ENCODE measurements at regions of chr1 and their contacts with region 1.

Region 1: DNA sequence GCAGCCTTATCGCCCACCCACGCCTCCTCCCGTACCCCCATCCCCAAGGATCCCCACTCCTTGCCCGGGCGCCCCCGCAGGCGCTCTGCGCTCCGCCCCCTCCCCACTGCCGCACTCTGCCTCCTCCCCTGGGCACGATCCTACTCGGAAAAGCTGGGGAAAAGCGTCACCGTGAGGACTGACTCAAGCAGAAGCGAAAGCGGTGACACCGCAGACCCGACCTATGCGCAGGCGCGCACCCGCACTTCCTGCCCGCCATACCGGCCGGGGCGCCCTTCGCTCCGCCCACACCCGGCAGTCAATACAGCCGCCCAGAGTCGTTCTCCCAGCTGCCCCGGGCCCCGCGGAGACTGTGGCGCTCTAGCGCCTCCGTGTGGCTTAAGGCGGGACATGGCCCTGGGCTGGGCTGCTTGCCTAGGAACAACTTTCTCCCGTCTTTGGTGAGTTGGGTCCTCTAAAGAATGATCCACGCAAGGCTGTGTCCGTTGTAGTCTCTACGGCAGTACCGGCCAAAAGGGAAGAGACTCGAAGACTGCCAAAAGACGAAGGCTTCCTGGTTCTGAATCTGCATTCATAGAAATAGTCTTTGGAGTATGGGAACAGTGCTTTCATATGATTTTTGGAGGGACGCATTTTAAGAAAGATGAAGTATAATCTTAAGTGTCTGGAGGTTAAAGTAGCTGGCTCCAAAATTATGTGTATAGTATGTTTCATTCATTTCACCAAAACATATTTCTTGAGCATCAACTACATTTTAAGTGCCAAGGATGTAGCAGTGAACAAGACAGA is at the start of gene OMA1:
- DNase-seq: peak; percentile 98
- ATAC-seq: peak; percentile 93
- H3K4me3 Mint-ChIP-seq: peak within 1 kb of the TSS; percentile 96
- H3K27ac Mint-ChIP-seq: peak within 1 kb of the TSS; percentile 97
- H3K4me1 Mint-ChIP-seq: peaks cover 19% of the 10 kb centered on the region
- H3K27me3 Mint-ChIP-seq: peaks cover 2% of the 10 kb centered on the region
- CTCF ChIP-seq: peak; percentile 24
- total RNA-seq, gene OMA1: 47.8 and 48.7 TPM in 2 replicates

Region 2: GRCh38 chr1:57296726-57297250 is 1249.9 kb before region 1 on chr1:
- CTCF ChIA-PET with region 1: no interaction called
- POLR2A ChIA-PET with region 1: no interaction called
- intact Hi-C with region 1: loop called (anchors 5 kb)
- DNase-seq: no peak
- ATAC-seq: no peak
- H3K4me3 Mint-ChIP-seq: no peak overlapping the region
- H3K27ac Mint-ChIP-seq: no peak overlapping the region
- H3K4me1 Mint-ChIP-seq: no peaks in the 10 kb centered on the region
- H3K27me3 Mint-ChIP-seq: no peaks in the 10 kb centered on the region
- CTCF ChIP-seq: no peak

Region 3: DNA sequence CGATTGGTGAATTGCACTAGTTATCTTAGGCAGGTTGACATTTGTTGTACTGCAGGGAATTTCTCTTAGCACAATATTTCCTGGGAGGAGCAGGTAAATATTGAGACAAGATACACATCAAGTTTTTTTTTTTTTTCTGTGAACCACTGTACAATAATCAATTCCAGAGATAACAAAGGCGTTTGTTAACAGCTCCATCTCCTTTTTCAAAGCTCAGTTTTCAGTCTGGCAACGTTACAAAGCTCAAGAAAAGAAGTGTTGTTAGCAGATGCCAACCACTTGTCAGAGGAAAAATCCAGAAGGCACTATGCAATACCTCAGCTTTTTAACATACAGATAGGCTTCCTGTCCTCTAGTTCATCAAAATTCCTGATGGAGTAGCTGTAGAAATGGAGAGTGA is 1082.0 kb before region 1 on chr1:
- CTCF ChIA-PET with region 1: no interaction called
- POLR2A ChIA-PET with region 1: no interaction called
- intact Hi-C with region 1: no loop called
- DNase-seq: no peak
- ATAC-seq: no peak
- H3K4me3 Mint-ChIP-seq: no peak overlapping the region
- H3K27ac Mint-ChIP-seq: no peak overlapping the region
- H3K4me1 Mint-ChIP-seq: no peaks in the 10 kb centered on the region
- H3K27me3 Mint-ChIP-seq: peaks cover 3% of the 10 kb centered on the region
- CTCF ChIP-seq: no peak

Region 4: DNA sequence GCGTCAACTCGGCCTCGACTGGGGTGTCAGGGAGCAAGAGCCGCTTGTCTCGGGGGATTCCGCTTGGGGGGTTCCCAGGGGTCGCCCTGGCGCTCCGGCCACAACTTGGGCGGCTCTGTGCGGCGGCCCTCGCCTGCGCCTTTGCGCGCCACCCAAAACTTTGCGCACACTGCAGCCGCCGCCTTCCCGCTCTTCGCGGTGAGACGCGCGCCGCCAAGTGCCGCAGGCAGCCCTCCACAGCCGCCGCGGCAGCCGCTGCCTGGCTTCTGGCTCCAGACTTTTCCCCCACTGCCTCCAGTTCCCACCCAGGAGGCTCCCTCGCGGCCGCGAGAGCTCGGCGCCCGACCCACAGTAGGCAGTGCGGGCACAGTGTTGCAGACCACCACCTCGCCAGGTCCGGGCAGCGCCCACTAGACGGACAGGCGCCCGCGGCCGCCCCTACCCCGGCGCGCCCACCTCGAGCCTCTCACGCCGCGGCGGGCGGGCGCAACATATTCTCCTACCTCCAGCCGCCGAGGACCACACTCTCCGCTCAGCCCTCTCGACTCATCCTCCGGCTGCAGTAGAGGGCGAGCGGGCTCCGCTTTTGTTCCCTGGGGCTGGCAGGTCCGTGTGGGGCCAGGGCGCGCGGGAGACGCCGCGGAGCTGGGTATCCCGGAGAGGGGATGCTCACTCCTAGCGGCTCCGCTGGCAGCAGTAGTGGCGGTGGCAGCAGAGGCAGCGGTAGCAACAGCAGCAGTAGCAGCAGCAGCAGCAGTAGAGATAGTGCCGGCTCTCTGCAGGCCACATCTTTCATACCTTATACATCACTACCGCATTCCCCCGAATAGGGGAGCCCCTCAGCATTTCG is 296.8 kb before region 1 on chr1:
- CTCF ChIA-PET with region 1: no interaction called
- POLR2A ChIA-PET with region 1: no interaction called
- intact Hi-C with region 1: loop called (anchors 1 kb)
- DNase-seq: no peak
- ATAC-seq: peak; percentile 18
- H3K4me3 Mint-ChIP-seq: peak overlapping the region; percentile 32
- H3K27ac Mint-ChIP-seq: no peak overlapping the region
- H3K4me1 Mint-ChIP-seq: peaks cover 4% of the 10 kb centered on the region
- H3K27me3 Mint-ChIP-seq: peaks cover 31% of the 10 kb centered on the region
- CTCF ChIP-seq: no peak

Region 5: DNA sequence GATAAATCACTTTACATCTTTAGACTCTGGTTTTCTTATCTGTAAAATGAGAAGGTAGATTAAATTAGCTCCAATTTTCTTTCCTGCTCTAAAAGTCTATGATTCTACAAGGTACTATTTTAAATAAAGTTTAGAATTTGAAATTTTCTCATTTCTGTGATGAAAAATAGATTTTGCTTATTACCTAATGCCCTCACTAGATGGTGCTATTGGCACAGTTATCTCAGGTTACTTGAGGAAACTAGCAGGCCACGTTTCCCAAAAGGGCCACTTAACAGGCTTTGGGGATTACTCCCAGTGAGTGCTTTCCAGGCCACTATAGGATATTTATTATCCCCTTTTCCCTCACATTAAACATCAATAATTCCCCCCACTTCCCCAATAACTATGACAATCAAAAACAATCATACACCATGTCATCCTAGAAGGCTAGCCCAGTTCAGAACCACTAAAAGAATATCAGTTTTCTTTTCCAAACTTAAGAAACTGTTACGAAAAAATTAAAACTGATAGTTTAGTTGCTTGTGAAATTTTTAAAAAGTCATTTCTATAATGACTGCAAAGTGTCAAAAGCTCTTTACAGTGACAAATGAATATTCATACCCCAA is 30.8 kb before region 1 on chr1:
- CTCF ChIA-PET with region 1: interaction called, 55 read pairs
- POLR2A ChIA-PET with region 1: interaction called, 13 read pairs
- intact Hi-C with region 1: loop called (anchors 1 kb)
- DNase-seq: no peak
- ATAC-seq: peak; percentile 52
- H3K4me3 Mint-ChIP-seq: no peak overlapping the region
- H3K27ac Mint-ChIP-seq: peak overlapping the region; percentile 36
- H3K4me1 Mint-ChIP-seq: peaks cover 2% of the 10 kb centered on the region
- H3K27me3 Mint-ChIP-seq: no peaks in the 10 kb centered on the region
- CTCF ChIP-seq: peak; percentile 65

Region 6: GRCh38 chr1:58699011-58699762 is 152.5 kb after region 1 on chr1:
- CTCF ChIA-PET with region 1: no interaction called
- POLR2A ChIA-PET with region 1: no interaction called
- intact Hi-C with region 1: loop called (anchors 1 kb)
- DNase-seq: no peak
- ATAC-seq: no peak
- H3K4me3 Mint-ChIP-seq: peak overlapping the region; percentile 99
- H3K27ac Mint-ChIP-seq: peak overlapping the region; percentile 94
- H3K4me1 Mint-ChIP-seq: peaks cover 15% of the 10 kb centered on the region
- H3K27me3 Mint-ChIP-seq: no peaks in the 10 kb centered on the region
- CTCF ChIP-seq: no peak

Region 7: GRCh38 chr1:59814180-59814900 is 1267.6 kb after region 1 on chr1:
- CTCF ChIA-PET with region 1: no interaction called
- POLR2A ChIA-PET with region 1: interaction called, 5 read pairs
- intact Hi-C with region 1: loop called (anchors 1 kb)
- DNase-seq: peak; percentile 73
- ATAC-seq: peak; percentile 94
- H3K4me3 Mint-ChIP-seq: no peak overlapping the region
- H3K27ac Mint-ChIP-seq: peak overlapping the region; percentile 78
- H3K4me1 Mint-ChIP-seq: peaks cover 5% of the 10 kb centered on the region
- H3K27me3 Mint-ChIP-seq: peaks cover 3% of the 10 kb centered on the region
- CTCF ChIP-seq: no peak